Naive thymus-derived CD4-positive, alpha-beta T cell (primary cell): ENCODE measurements at regions of chr2 and their contacts with region 1.

Region 1: DNA sequence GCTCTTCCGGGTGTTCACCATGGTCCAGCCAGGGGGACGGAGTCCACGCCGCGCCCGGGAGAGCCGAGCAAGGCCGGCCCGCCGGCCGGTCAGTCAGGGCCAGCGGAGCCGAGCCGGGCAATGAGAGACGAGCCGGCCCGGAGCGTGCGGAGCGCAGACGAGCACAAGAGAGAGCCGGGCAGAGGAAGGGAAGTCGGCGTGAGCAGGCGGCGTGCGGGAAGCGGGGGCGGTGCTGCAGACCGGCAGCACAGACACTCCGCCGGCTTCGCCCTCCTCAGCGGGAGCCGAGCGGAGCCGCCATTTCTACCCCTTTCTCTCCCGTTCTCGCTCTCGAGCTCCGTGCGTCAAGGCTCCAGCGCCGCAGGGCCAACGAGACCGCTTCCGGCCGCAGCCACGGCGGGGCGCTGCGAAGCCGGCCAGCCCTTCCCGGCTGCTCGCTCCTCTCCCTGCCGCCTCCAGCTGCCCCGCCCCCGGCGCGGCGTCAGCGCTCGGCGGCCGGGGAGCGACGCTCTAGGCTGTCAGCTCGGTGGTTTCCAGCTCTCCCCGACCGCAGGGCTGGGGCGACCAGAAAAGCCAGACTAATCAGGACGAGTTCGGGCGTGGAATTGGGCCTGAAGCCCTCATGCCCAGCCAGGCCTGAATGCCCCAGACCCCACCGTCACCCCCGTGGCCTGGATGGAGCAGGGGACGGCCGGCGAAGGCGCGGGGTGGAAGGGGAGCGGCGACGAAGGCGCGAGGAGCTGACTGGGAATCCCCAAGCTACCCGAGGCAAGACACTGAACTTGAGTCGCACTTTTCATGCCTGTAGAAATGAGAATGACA is at the start of gene ATAD2B:
- DNase-seq: peak; percentile 90 to 97 (median 95)
- ATAC-seq: peak; percentile 90
- H3K4me3 ChIP-seq: peak within 1 kb of the TSS; percentile 94
- H3K4me3 Mint-ChIP-seq: peak within 1 kb of the TSS; percentile 95 to 99 (median 98)
- H3K27ac ChIP-seq: peak within 1 kb of the TSS; percentile 97
- H3K27ac Mint-ChIP-seq: peak within 1 kb of the TSS; percentile 95 to 100 (median 99)
- H3K4me1 ChIP-seq: peaks cover 20 to 31% of the 10 kb centered on the region in 2 donors
- H3K4me1 Mint-ChIP-seq: peaks cover 34 to 57% (median 46%) of the 10 kb centered on the region in 7 donors
- H3K27me3 ChIP-seq: no peaks in the 10 kb centered on the region
- H3K27me3 Mint-ChIP-seq: peaks cover 0 to 4% (median 0%) of the 10 kb centered on the region in 5 donors
- total RNA-seq, gene ATAD2B: 31.8 to 55.8 (median 43.3) TPM

Region 2: GRCh38 chr2:23384551-23385349 is 542.2 kb before region 1 on chr2 and contains the start of gene KLHL29:
- CTCF ChIA-PET with region 1: no interaction called
- POLR2A ChIA-PET with region 1: no interaction called
- intact Hi-C with region 1: loop called in 1 of 2 experiments (anchors 10 kb)
- DNase-seq: peak; percentile 56 to 79 (median 72)
- ATAC-seq: peak; percentile 88
- H3K4me3 ChIP-seq: peak within 1 kb of the TSS; percentile 46
- H3K4me3 Mint-ChIP-seq: peak within 1 kb of the TSS; percentile 85 to 97 (median 90)
- H3K27ac ChIP-seq: no peak within 1 kb of the TSS
- H3K27ac Mint-ChIP-seq: peak within 1 kb of the TSS in 8 of 9 donors; percentile 76 to 96 (median 84)
- H3K4me1 ChIP-seq: peaks cover 0 to 24% of the 10 kb centered on the region in 2 donors
- H3K4me1 Mint-ChIP-seq: peaks cover 17 to 41% (median 35%) of the 10 kb centered on the region in 7 donors
- H3K27me3 ChIP-seq: peaks cover 0 to 2% of the 10 kb centered on the region in 2 donors
- H3K27me3 Mint-ChIP-seq: peaks cover 23 to 77% (median 40%) of the 10 kb centered on the region in 5 donors
- total RNA-seq, gene KLHL29: 5.4 to 6.5 (median 6.2) TPM

Region 3: DNA sequence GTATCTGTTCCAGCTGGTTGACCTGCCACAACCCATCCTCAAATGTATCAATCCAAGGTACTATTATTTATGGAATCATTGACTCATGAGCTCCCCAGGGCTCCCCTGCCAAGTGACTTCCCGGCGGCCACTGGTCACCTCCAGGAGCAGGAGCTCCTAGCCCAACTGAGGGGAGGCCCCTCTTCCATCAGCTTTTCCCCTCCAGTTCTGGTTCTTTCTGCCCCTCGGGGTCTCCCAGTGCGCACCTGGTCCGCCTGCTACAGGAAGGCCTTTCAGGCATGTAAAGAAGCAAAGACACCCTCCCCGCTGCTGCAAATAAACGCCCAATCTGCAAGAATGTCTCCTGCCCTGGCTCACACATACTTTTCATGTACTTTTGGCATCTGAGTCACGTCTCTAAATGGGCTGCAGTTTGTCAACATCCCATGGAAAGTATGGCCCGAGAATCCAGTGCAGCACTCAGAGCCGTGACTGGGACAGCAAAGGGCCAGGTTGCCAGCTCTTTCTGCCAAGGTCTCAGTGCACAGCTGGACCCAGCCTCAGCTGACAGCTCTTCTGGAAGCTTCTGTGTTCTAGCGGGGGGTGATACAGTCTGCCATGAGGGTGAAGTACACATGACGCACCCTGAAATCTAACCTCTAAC is 500.6 kb before region 1 on chr2:
- CTCF ChIA-PET with region 1: no interaction called
- POLR2A ChIA-PET with region 1: no interaction called
- intact Hi-C with region 1: no loop called
- DNase-seq: no peak
- ATAC-seq: no peak
- H3K4me3 ChIP-seq: no peak overlapping the region
- H3K4me3 Mint-ChIP-seq: no peak overlapping the region
- H3K27ac ChIP-seq: no peak overlapping the region
- H3K27ac Mint-ChIP-seq: no peak overlapping the region
- H3K4me1 ChIP-seq: no peaks in the 10 kb centered on the region
- H3K4me1 Mint-ChIP-seq: peaks cover 0 to 4% (median 0%) of the 10 kb centered on the region in 7 donors
- H3K27me3 ChIP-seq: no peaks in the 10 kb centered on the region
- H3K27me3 Mint-ChIP-seq: peaks cover 0 to 11% (median 0%) of the 10 kb centered on the region in 5 donors

Region 4: GRCh38 chr2:23871206-23871605 is 55.8 kb before region 1 on chr2:
- CTCF ChIA-PET with region 1: interaction called, 3 read pairs
- POLR2A ChIA-PET with region 1: interaction called, 3 read pairs
- intact Hi-C with region 1: loop called in 1 of 2 experiments (anchors 10 kb)
- DNase-seq: no peak
- ATAC-seq: no peak
- H3K4me3 ChIP-seq: no peak overlapping the region
- H3K4me3 Mint-ChIP-seq: no peak overlapping the region
- H3K27ac ChIP-seq: no peak overlapping the region
- H3K27ac Mint-ChIP-seq: peak overlapping the region in 3 of 9 donors; percentile 40 to 44 (median 41)
- H3K4me1 ChIP-seq: no peaks in the 10 kb centered on the region
- H3K4me1 Mint-ChIP-seq: peaks cover 0 to 7% (median 0%) of the 10 kb centered on the region in 7 donors
- H3K27me3 ChIP-seq: no peaks in the 10 kb centered on the region
- H3K27me3 Mint-ChIP-seq: no peaks in the 10 kb centered on the region

Region 5: DNA sequence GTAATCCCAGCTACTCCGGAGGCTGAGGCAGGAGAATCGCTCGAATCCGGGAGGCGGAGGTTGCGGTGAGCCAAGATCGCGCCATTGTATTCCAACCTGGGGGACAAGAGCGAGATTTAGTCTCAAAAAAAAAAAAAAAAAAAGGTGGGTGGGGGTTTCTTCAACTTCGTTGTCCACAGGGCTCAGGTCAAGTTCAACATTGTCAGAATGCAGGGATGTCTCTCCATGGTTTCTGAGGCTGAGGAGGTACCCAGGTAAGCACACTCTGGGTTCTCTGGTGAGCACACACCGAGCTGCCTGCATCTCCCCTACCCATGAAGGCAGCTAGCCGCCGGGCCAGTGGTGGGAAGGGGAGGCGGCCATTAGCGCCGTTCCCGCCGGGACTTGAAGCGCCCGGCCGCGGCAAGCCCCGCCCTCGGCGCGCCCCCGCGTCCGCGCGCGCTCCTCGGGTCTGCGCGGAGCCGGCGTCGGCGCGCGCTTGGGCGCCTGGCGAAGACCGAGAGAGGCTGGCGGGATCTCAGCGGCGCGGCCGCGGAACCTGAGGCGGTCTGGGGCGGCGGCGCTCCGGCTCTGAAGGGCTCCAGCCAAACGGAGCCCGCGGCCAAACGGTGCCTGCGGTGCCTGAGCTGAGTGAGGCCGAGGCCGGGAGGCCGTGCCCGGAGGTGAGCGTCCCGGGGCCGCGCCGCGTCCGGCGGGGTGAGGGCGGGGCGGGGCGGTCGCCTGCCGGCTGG is 13.2 kb after region 1 on chr2 and contains the start of gene UBXN2A:
- CTCF ChIA-PET with region 1: interaction called, 24 read pairs
- POLR2A ChIA-PET with region 1: interaction called, 137 read pairs
- intact Hi-C with region 1: loop called (anchors 1 kb)
- DNase-seq: peak; percentile 59 to 85 (median 79)
- ATAC-seq: peak; percentile 96
- H3K4me3 ChIP-seq: peak within 1 kb of the TSS; percentile 94
- H3K4me3 Mint-ChIP-seq: peak within 1 kb of the TSS; percentile 85 to 97 (median 92)
- H3K27ac ChIP-seq: peak within 1 kb of the TSS; percentile 76
- H3K27ac Mint-ChIP-seq: peak within 1 kb of the TSS; percentile 85 to 94 (median 86)
- H3K4me1 ChIP-seq: peaks cover 6 to 14% of the 10 kb centered on the region in 2 donors
- H3K4me1 Mint-ChIP-seq: peaks cover 23 to 40% (median 34%) of the 10 kb centered on the region in 7 donors
- H3K27me3 ChIP-seq: no peaks in the 10 kb centered on the region
- H3K27me3 Mint-ChIP-seq: peaks cover 0 to 16% (median 7%) of the 10 kb centered on the region in 5 donors
- total RNA-seq, gene UBXN2A: 11.5 to 13.5 (median 12.4) TPM

Region 6: GRCh38 chr2:24046930-24047702 is 120.2 kb after region 1 on chr2 and contains the start of gene WDCP:
- CTCF ChIA-PET with region 1: interaction called, 8 read pairs
- POLR2A ChIA-PET with region 1: interaction called, 24 read pairs
- intact Hi-C with region 1: loop called (anchors 1 kb)
- DNase-seq: peak; percentile 67 to 95 (median 90)
- ATAC-seq: peak; percentile 100
- H3K4me3 ChIP-seq: peak within 1 kb of the TSS; percentile 81
- H3K4me3 Mint-ChIP-seq: peak within 1 kb of the TSS; percentile 86 to 99 (median 95)
- H3K27ac ChIP-seq: peak within 1 kb of the TSS; percentile 74
- H3K27ac Mint-ChIP-seq: peak within 1 kb of the TSS; percentile 73 to 96 (median 88)
- H3K4me1 ChIP-seq: peaks cover 0 to 4% of the 10 kb centered on the region in 2 donors
- H3K4me1 Mint-ChIP-seq: peaks cover 17 to 42% (median 35%) of the 10 kb centered on the region in 7 donors
- H3K27me3 ChIP-seq: peaks cover 0 to 8% of the 10 kb centered on the region in 2 donors
- H3K27me3 Mint-ChIP-seq: peaks cover 5 to 12% (median 9%) of the 10 kb centered on the region in 5 donors
- total RNA-seq, gene WDCP: 3.9 to 22.1 (median 17.8) TPM

Region 7: GRCh38 chr2:24164125-24164973 is 237.4 kb after region 1 on chr2:
- CTCF ChIA-PET with region 1: no interaction called
- POLR2A ChIA-PET with region 1: no interaction called
- intact Hi-C with region 1: loop called in 1 of 2 experiments (anchors 1 kb)
- DNase-seq: peak in 7 of 9 donors; percentile 7 to 43 (median 12)
- ATAC-seq: peak; percentile 90
- H3K4me3 ChIP-seq: no peak overlapping the region
- H3K4me3 Mint-ChIP-seq: no peak overlapping the region
- H3K27ac ChIP-seq: no peak overlapping the region
- H3K27ac Mint-ChIP-seq: no peak overlapping the region
- H3K4me1 ChIP-seq: no peaks in the 10 kb centered on the region
- H3K4me1 Mint-ChIP-seq: no peaks in the 10 kb centered on the region
- H3K27me3 ChIP-seq: no peaks in the 10 kb centered on the region
- H3K27me3 Mint-ChIP-seq: peaks cover 0 to 3% (median 0%) of the 10 kb centered on the region in 5 donors

Region 8: GRCh38 chr2:24490674-24491625 is 564.0 kb after region 1 on chr2 and contains the start of gene NCOA1:
- CTCF ChIA-PET with region 1: no interaction called
- POLR2A ChIA-PET with region 1: no interaction called
- intact Hi-C with region 1: loop called (anchors 2 to 5 kb)
- DNase-seq: peak; percentile 82 to 92 (median 90)
- ATAC-seq: peak; percentile 91
- H3K4me3 ChIP-seq: peak within 1 kb of the TSS; percentile 63
- H3K4me3 Mint-ChIP-seq: peak within 1 kb of the TSS; percentile 80 to 95 (median 90)
- H3K27ac ChIP-seq: peak within 1 kb of the TSS; percentile 93
- H3K27ac Mint-ChIP-seq: peak within 1 kb of the TSS; percentile 87 to 98 (median 93)
- H3K4me1 ChIP-seq: peaks cover 26 to 48% of the 10 kb centered on the region in 2 donors
- H3K4me1 Mint-ChIP-seq: peaks cover 46 to 62% (median 59%) of the 10 kb centered on the region in 7 donors
- H3K27me3 ChIP-seq: no peaks in the 10 kb centered on the region
- H3K27me3 Mint-ChIP-seq: peaks cover 0 to 11% (median 0%) of the 10 kb centered on the region in 5 donors
- total RNA-seq, gene NCOA1: 20.9 to 72.8 (median 46.6) TPM